ENCODE measurements at regions of chr4 and their contacts with region 1.

Region 1: DNA sequence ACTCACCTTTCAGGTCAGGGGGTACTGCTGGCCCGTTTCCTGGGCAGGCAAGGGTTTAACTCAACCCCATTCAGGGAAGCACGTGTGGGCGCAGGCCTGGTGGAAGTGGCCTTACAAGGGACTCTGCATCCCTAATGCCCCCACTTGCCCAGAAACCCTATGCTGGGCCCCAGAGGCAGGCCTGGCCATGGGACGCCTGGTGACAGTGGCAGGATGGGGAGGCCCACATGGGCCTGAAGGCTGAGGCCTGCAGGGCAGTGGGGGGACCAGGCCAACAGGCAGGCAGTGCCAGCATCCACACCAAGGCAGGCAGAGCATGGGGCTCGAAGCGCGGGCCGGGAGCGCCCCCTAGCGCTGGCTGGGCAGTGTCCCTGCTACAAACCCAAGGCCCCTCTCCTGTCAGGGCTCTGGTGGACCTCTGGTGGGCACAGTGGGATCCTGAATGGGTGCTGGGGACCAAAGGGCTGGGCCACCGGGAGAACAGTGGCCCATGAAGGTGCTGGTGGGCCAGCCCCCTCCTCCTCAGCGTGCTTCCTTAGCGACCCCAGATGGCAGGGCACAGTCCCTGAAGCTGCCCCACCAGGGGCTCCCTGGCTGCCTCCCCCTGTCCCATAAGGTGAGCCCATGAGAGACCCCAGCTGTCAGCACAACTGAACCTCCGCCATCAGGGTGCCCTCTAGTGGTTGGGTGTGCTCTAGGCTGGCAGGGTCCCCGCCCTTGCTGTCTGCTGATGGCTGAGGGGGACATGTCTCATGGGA is 16.8 kb downstream of the FGFR3 start:
- DNase-seq: peak in 9 of 10 donors; percentile 61 to 84 (median 69)
- H3K4me3 ChIP-seq: no peak overlapping the region
- H3K27ac ChIP-seq: peak overlapping the region in 10 of 59 donors; percentile 10 to 46 (median 29)
- H3K27me3 ChIP-seq: no peaks in the 10 kb centered on the region
- CTCF ChIP-seq: peak; percentile 47 to 95 (median 85)

Region 2: GRCh38 chr4:1746265-1746691 is 63.7 kb before region 1 on chr4:
- intact Hi-C with region 1: loop called (anchors 1 to 2 kb)
- DNase-seq: peak in 9 of 10 donors; percentile 56 to 78 (median 68)
- H3K4me3 ChIP-seq: no peak overlapping the region
- H3K27ac ChIP-seq: peak overlapping the region in 3 of 59 donors; percentile 24 to 82 (median 56)
- H3K27me3 ChIP-seq: peaks cover 0 to 3% (median 0%) of the 10 kb centered on the region in 45 donors
- CTCF ChIP-seq: peak; percentile 32 to 80 (median 71)

Region 3: GRCh38 chr4:1870578-1871443 is 60.9 kb after region 1 on chr4 and contains the start of gene NSD2:
- intact Hi-C with region 1: no loop called
- DNase-seq: peak; percentile 64 to 91 (median 81)
- H3K4me3 ChIP-seq: peak within 1 kb of the TSS; percentile 61 to 93 (median 80)
- H3K27ac ChIP-seq: peak within 1 kb of the TSS; percentile 6 to 98 (median 94)
- H3K27me3 ChIP-seq: peaks cover 0 to 3% (median 0%) of the 10 kb centered on the region in 45 donors
- CTCF ChIP-seq: peak in 2 of 56 donors; percentile 11 to 20
- total RNA-seq, gene NSD2: 78.8 to 144 (median 108) TPM